Panc1 (cell line): ENCODE measurements at regions of chr10 and their contacts with region 1.

Region 1: DNA sequence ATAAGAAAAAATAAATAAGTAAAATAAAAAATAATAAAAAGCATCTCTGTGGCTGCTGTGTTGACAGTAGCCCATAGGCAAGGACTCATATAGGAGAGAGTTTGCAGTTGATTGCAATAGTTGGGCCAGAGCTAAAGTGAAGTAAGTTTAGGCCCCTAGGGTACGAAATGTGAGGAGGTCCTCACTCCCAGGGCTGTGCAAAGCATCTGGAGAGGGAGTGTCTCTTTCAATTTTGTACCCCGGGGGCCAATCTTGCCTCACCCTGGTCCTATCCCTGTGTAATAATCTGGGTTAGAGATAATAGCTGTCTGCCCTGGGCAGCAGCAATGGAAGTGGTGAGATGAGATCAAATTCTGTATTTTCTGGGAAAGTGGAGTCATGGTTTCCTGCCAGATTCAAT is 365.7 kb downstream of the GATA3 start:
- DNase-seq: no peak
- ATAC-seq: no peak
- H3K4me3 ChIP-seq: no peak overlapping the region
- H3K27ac ChIP-seq: no peak overlapping the region
- H3K4me1 ChIP-seq: no peaks in the 10 kb centered on the region
- H3K27me3 ChIP-seq: no peaks in the 10 kb centered on the region
- CTCF ChIP-seq: no peak

Region 2: DNA sequence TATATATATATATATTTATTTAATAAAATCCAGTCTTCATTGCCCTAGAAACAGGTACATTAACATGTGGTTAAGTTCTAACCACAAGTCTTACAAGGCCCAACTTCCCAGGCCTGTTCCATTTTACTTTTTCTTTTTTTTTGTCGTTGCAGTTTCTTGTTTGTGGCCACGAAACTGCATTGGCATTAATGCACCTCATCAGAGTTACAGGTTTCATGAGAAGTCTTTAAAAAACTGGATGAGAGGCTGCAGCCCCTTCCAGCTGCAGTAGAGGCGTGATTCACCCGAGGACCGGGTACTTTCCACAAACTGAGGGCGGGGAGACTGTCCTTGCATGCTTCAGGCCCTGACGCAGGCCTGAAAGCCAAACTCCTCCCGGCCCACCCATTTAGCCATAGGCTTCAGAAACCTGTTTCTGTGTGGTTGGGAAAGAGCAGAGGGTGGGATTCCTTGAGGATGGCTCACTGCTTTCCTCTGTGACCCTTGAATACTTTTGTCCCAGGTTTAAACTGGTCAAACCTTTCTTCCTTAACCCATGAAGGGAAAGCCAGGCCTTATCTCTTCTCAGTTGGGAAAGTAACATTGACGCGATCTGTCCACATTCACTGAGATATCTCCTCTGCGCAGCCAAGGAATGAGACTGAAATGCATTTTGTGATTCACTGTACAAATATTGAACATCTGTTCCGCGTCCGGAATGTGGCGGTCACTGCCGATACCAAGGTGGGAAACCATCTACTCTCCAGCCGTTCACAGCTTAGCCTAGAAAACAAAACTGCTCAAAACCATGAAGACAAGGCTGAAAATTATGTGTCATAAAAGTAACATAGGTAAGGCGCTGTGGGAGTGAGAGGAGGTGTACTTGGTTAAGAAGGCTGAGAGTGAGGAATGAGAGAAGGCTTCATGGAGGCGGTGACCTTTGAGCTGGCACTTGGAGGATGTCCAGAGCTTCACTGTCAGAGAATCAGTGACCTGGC is 53.9 kb before region 1 on chr10:
- CTCF ChIA-PET with region 1: no interaction called
- POLR2A ChIA-PET with region 1: interaction called, 13 read pairs
- in situ Hi-C with region 1: no loop called
- intact Hi-C with region 1: no loop called
- DNase-seq: peak; percentile 39
- ATAC-seq: peak; percentile 91
- H3K4me3 ChIP-seq: peak overlapping the region in 1 of 2 experiments; percentile 20; a peak in 1 of 4 replicates
- H3K27ac ChIP-seq: peak overlapping the region; percentile 52
- H3K4me1 ChIP-seq: no peaks in the 10 kb centered on the region; the same call in 1 of the 2 replicates
- H3K27me3 ChIP-seq: no peaks in the 10 kb centered on the region
- CTCF ChIP-seq: no peak